AG04449 (cell line): ENCODE measurements at regions of chr20 and their contacts with region 1.

Region 1: GRCh38 chr20:62926239-62927104 is at the start of gene DIDO1:
- DNase-seq: no peak
- H3K4me3 ChIP-seq: peak within 1 kb of the TSS; percentile 88
- CTCF ChIP-seq: peak; percentile 69

Region 2: GRCh38 chr20:62561182-62561581 is 365.3 kb before region 1 on chr20:
- CTCF ChIA-PET with region 1: no interaction called
- POLR2A ChIA-PET with region 1: no interaction called
- DNase-seq: no peak
- H3K4me3 ChIP-seq: no peak overlapping the region
- CTCF ChIP-seq: no peak

Region 3: DNA sequence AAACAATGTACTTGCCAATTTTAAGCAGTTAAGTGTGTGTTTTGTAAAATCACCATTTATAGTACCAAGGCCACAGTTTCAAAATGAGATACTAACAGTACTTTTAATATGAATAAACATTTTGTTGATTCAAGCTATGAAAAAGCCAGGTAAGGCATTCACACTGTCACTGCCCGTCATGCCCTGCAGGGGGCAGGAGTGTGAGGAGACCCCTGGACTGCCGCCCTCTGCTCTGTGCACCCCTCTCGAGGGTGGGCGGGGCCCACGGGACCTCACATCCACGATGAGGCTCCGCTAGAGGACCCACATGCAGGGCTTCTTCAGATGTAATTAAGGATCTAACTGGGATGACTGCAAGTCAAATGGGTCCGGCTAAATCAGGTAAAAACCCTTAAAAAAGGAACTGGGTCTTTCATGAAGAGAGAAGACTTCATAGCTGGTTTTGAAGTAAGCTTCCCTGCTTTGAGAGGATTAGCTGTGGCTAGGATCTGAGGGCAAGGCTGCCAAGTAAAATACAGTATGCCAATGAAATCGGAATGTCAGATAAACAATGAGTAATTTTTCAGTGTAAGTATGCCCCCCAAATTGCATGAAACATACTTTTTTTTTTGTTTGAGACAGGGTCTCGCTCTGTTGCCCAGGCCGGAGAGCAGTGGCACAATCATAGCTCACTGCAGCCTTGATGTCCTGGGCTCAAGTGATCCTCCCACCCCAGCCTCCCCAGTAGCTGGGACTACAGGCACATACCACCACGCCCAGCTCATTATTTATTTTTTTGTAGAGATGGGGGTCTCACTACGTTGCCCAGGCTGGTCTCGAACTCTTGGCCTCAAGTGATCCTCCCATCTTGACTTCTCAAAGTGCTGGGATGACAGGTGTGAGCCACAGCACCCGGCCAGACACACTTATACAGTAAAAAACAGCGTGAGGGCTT is 18.8 kb before region 1 on chr20:
- CTCF ChIA-PET with region 1: interaction called, 189 read pairs
- POLR2A ChIA-PET with region 1: interaction called, 3 read pairs
- DNase-seq: no peak
- H3K4me3 ChIP-seq: no peak overlapping the region
- CTCF ChIP-seq: peak; percentile 38

Region 4: GRCh38 chr20:62914970-62915457 is 11.5 kb before region 1 on chr20:
- CTCF ChIA-PET with region 1: interaction called, 39 read pairs
- POLR2A ChIA-PET with region 1: no interaction called
- DNase-seq: no peak
- H3K4me3 ChIP-seq: no peak overlapping the region
- CTCF ChIP-seq: no peak

Region 5: DNA sequence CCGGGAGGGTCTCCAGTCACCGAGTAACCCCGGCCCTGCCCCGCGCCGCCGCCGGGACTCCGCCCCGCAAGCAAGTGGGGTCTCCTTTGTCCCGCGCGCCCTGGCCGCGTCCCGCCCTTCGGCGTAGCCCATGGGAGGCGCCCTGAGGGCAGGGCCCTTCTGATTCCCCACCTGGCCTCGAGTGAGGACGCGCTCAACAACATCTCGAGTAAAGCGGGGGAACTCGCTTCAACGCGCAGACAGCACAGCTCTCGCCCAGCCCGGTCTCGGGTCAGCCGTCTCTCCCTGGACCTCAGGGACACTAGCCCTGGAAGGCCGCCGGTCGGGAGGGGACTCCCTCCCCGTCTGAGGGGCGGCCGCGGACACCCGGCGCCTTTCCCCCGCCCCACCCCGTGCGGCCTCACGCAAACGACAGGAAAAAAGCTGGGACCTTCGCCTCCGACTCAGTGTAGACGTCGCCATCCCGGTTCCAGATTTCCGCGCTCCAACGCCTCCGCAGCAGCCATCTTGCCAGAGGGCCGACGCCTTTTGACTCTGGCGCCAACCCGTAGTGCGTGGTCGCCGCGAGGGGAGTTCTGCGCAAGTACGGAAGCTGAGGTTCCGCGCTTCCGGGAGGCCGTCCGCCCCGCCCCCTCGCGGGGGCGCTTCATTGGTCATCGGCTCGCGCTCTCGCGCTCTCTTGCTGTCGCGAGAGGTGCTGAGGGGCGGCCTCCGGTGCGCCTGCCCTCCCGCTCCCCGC is 11.1 kb after region 1 on chr20:
- CTCF ChIA-PET with region 1: interaction called, 68 read pairs
- POLR2A ChIA-PET with region 1: interaction called, 6 read pairs
- DNase-seq: peak; percentile 83
- H3K4me3 ChIP-seq: peak overlapping the region; percentile 94
- CTCF ChIP-seq: no peak

Region 6: DNA sequence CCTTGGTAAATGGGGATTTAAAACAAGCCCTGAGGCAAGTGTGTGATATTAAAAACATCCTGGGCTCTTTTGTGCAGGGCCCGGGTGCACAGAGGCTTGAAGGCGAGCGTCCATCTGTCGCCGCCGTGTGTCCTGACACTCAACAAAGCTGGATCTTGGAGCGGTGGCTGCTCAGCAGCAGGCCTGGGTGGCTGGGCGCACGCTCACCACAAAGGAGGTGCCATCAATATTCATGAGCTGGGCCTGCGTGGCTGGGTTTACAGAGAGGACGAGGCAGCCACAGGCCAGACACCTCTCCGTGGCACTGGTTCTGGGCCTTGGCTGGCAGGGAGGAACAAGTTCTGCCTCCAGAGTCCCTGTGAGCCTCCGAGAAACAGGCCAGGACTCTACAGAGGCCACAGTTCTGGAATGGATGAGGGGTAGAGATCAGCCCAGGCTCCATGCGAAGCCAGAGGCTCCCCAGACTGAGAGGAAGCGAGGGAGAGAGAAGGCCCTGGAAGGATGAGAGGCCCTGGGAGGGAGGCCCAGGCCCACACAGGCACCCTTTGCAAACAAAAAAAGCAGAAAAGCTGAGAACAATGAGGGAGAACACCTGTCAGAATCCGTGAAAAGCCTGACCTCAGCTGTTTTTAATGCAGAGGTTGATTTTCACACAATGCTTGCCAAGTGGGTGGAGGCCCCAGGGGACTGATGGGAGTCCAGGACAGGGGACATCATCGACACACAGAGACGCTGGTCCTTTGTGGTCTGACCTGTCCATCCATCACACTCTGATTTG is 58.4 kb after region 1 on chr20:
- CTCF ChIA-PET with region 1: no interaction called
- POLR2A ChIA-PET with region 1: no interaction called
- DNase-seq: no peak
- H3K4me3 ChIP-seq: no peak overlapping the region
- CTCF ChIP-seq: no peak